CD4-positive, alpha-beta memory T cell (primary cell): ENCODE measurements at regions of chr4 and their contacts with region 1.

Region 1: GRCh38 chr4:80007745-80008149 is 65.3 kb downstream of the ANTXR2 start:
- DNase-seq: no peak
- H3K4me3 ChIP-seq: no peak overlapping the region
- H3K4me3 Mint-ChIP-seq: peak overlapping the region in 7 of 8 donors; percentile 40 to 84 (median 74)
- H3K27ac ChIP-seq: peak overlapping the region; percentile 39
- H3K27ac Mint-ChIP-seq: peak overlapping the region; percentile 83 to 92 (median 91)
- H3K4me1 ChIP-seq: peaks cover 69% of the 10 kb centered on the region
- H3K4me1 Mint-ChIP-seq: peaks cover 46 to 77% (median 59%) of the 10 kb centered on the region in 4 donors
- H3K27me3 ChIP-seq: no peaks in the 10 kb centered on the region
- H3K27me3 Mint-ChIP-seq: no peaks in the 10 kb centered on the region

Region 2: DNA sequence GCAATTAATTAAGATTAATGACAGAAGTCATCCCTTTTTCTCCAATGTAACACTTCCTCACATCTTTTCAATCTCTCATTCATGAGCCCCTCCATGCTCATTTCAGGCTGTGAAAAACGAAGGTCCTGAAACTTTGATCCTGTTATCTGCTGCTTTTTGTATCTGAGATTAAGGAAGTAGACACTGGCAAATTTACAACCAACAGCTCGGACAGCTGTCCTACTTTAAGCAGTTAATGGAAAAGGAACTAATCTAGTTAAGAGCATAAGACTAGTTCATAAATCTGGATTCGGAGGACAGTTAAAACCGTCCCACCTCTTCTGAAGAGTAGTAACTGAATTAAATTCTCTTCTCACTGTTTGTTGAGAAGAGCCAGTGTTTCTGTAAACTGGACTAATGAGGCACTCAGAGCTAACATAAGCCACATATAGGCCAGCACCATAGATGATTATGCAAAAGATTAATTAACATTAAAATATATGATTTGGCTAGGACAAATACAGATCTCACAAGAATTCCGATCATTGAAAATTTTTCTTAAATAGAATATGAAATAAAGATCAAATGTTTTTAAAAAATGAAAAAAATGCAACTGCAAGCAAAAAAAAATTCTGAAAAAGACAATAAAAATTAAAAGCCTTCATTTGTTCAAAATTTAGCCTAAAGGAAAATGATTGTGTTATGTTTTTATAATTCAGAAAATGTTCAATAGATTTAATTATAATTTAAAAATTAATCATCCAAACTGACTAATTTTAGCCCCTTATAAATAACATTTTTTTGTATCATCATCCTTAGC is 49.1 kb before region 1 on chr4:
- CTCF ChIA-PET with region 1: no interaction called
- POLR2A ChIA-PET with region 1: no interaction called
- intact Hi-C with region 1: no loop called
- DNase-seq: no peak
- H3K4me3 ChIP-seq: no peak overlapping the region
- H3K4me3 Mint-ChIP-seq: no peak overlapping the region
- H3K27ac ChIP-seq: no peak overlapping the region
- H3K27ac Mint-ChIP-seq: no peak overlapping the region
- H3K4me1 ChIP-seq: no peaks in the 10 kb centered on the region
- H3K4me1 Mint-ChIP-seq: peaks cover 0 to 10% (median 5%) of the 10 kb centered on the region in 4 donors
- H3K27me3 ChIP-seq: no peaks in the 10 kb centered on the region
- H3K27me3 Mint-ChIP-seq: no peaks in the 10 kb centered on the region

Region 3: DNA sequence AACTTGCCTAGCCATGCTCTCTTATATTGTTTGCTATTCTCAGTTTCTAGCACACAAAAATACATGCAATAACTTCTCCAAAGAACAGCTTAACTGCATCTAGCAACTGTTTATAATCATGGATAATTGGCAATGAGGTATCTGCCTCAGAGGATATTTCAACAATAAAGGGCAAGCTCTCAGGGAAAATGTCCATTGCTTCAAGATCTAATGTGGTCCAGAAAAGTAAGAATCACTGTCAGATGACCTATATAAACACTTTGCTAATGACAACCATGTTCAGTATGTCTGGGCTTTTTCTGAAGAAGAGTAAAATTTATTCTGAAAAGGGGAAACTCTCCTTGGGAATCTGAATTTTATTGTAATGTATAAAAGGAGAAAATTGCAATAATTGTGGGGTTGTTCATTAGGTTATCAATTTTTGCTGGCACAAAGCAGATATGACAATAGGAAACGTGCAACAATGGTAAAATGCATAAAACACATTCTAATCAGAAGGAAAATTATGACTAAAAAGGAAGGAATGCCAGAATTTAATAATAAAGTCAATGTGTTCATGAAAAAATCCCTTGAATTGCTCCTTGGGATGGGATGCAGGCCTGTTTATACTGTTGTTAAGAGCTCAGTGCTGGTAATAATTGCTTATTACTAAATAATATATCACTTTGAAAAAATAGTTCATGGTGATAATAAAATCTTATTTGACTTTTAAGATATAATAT is 25.0 kb before region 1 on chr4:
- CTCF ChIA-PET with region 1: no interaction called
- POLR2A ChIA-PET with region 1: no interaction called
- intact Hi-C with region 1: no loop called
- DNase-seq: no peak
- H3K4me3 ChIP-seq: no peak overlapping the region
- H3K4me3 Mint-ChIP-seq: no peak overlapping the region
- H3K27ac ChIP-seq: no peak overlapping the region
- H3K27ac Mint-ChIP-seq: no peak overlapping the region
- H3K4me1 ChIP-seq: no peaks in the 10 kb centered on the region
- H3K4me1 Mint-ChIP-seq: peaks cover 9 to 18% (median 14%) of the 10 kb centered on the region in 4 donors
- H3K27me3 ChIP-seq: no peaks in the 10 kb centered on the region
- H3K27me3 Mint-ChIP-seq: no peaks in the 10 kb centered on the region

Region 4: DNA sequence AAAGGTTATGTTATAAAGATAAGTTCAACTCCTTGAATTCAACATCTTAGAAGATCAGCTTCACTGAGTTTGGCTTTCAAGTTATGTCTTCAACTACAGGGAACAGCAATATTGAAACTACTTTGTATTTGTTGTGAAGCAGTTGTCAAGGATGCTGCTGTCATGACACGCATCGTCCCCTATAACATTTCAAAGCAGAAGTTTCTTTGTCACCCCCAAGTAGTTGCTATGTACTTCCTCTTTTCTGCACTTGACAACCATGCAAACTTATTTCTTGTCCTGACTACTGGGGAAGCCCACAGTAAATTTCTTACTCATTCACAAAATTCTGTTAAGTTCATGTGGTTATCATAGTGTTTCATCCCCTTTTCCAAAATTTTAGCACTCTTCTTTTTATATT is 51.0 kb after region 1 on chr4:
- CTCF ChIA-PET with region 1: no interaction called
- POLR2A ChIA-PET with region 1: no interaction called
- intact Hi-C with region 1: loop called (anchors 5 kb)
- DNase-seq: peak; percentile 75 to 90 (median 86)
- H3K4me3 ChIP-seq: peak overlapping the region in 1 of 2 donors; percentile 13
- H3K4me3 Mint-ChIP-seq: peak overlapping the region; percentile 74 to 95 (median 84)
- H3K27ac ChIP-seq: peak overlapping the region; percentile 85
- H3K27ac Mint-ChIP-seq: peak overlapping the region; percentile 97 to 100 (median 99)
- H3K4me1 ChIP-seq: peaks cover 65% of the 10 kb centered on the region
- H3K4me1 Mint-ChIP-seq: peaks cover 37 to 79% (median 54%) of the 10 kb centered on the region in 4 donors
- H3K27me3 ChIP-seq: no peaks in the 10 kb centered on the region
- H3K27me3 Mint-ChIP-seq: no peaks in the 10 kb centered on the region